Dorsolateral prefrontal cortex (tissue), 120 donors: ENCODE measurements at regions of chr4 and their contacts with region 1.

Region 1: GRCh38 chr4:138182838-138183426 is 59.2 kb downstream of the SLC7A11 start:
- DNase-seq: no peak
- H3K4me3 ChIP-seq: peak overlapping the region in 28 of 59 donors; percentile 0 to 55 (median 21)
- H3K27ac ChIP-seq: peak overlapping the region in 48 of 59 donors; percentile 0 to 90 (median 57)
- H3K27me3 ChIP-seq: no peaks in the 10 kb centered on the region
- CTCF ChIP-seq: peak; percentile 36 to 88 (median 70)

Region 2: GRCh38 chr4:137923494-137923893 is 259.4 kb before region 1 on chr4:
- intact Hi-C with region 1: no loop called
- DNase-seq: no peak
- H3K4me3 ChIP-seq: no peak overlapping the region
- H3K27ac ChIP-seq: no peak overlapping the region
- H3K27me3 ChIP-seq: no peaks in the 10 kb centered on the region
- CTCF ChIP-seq: no peak

Region 3: GRCh38 chr4:138259801-138260200 is 76.9 kb after region 1 on chr4:
- intact Hi-C with region 1: no loop called
- DNase-seq: no peak
- H3K4me3 ChIP-seq: no peak overlapping the region
- H3K27ac ChIP-seq: no peak overlapping the region
- H3K27me3 ChIP-seq: no peaks in the 10 kb centered on the region
- CTCF ChIP-seq: no peak

Region 4: DNA sequence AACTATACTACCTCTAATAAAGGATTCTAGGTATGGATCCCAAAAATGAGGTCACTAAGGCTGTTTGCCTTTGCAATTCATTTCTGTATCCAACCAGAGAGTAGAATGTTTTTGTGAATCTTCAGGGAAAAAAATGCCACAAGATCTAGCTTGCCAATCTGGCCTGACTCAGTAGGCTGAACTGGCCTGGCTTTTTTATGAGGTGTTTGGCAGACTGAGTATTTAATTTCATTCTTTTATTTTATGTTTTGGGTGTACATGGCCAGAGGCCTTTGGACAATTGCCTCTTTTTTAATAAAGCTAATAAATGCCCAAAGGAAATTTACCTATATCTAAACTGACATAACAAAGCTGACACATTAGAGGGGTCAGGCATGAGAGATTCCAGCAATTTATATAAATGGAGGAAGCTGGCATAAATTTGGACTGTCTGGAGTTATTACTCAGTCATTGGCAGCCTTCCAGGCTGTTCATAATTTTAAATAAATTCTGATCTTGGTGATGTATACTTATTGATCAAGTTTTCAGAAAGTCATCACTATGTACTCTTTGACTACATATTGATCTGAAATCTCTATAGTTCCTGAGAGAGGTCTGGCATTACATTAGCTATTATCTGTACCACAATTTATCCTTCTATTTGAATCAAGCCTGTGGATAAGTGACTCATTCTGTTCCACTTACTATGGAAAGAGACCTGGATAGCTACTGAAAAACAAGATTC is 456.2 kb after region 1 on chr4:
- intact Hi-C with region 1: no loop called
- DNase-seq: no peak
- H3K4me3 ChIP-seq: no peak overlapping the region
- H3K27ac ChIP-seq: no peak overlapping the region
- H3K27me3 ChIP-seq: no peaks in the 10 kb centered on the region
- CTCF ChIP-seq: no peak

Region 5: DNA sequence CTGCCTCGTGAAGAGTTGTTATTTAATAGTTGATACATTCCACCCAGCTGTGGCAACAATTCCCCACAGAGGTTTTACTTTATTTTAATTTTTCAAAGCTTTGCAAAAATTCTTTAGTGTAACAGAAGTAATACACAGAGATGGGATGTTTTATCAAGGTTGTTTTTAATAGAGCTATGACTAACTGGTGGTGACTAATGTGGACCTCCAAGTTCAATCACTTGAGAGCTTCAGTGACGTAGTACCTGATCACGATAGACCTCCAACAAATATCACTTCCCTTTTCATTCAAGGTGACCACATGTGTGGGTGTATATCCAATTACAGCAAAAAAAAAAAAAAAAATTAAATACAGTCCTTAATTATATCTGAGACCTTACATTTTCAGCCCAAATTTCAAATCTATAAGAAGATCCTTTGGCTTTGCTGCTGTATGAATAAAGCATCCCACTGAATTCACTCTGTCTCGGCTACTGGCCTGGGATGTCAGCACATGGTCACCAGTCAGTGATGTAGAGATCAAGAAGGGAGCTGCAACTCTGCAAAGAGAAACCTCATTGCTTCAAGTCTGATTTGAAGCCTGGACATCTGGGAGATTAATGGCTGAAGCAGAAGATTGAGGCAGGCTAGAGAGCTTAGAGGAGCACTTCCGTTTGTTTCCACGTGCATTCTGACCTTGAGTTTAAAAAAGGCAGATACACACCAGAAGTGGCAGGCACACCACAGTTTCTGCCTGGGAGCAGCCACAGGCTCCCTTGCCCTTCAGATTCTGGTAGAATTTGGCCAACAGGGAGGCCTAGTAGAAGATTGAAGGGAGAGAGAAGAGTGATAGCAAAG is 486.8 kb after region 1 on chr4:
- intact Hi-C with region 1: loop called in 1 of 2 experiments (anchors 10 kb)
- DNase-seq: no peak
- H3K4me3 ChIP-seq: no peak overlapping the region
- H3K27ac ChIP-seq: no peak overlapping the region
- H3K27me3 ChIP-seq: no peaks in the 10 kb centered on the region
- CTCF ChIP-seq: no peak